Transverse colon (tissue), 4 donors: ENCODE measurements at regions of chr9 and their contacts with region 1.

Region 1: DNA sequence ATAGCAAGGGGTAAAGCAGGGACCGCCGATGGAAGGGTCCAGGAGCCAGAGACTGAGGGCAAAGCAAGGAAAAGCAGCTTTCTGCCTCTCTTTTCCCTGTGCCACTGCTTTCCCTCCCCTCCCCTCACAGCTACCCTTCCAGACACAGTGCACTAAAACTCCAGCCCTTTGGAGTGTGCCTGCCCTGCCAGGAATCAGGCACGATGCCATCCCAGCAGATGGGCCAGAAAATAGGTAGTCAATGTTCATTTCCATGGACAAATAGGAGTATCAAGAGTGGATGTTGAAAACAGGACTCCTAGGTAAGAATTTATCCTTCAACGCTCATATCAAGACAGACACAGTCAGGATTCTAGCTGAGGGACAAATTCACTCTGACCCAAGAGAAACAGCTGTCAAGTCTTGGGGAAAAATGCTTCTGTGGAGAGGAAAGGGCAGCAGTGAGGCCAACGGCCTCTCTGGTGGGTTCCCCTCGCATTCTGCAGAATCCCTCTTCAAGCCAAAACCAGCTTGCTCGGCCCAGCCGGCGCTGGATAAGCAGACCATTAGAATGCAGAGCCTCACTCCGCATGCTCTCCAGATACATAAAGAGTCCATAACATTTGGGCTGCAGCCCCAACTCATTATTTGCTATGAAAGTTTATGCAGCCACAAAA is 138.0 kb downstream of the CAAP1 start:
- DNase-seq: no peak
- H3K4me3 ChIP-seq: no peak overlapping the region
- H3K27ac ChIP-seq: no peak overlapping the region
- H3K4me1 ChIP-seq: no peaks in the 10 kb centered on the region
- H3K27me3 ChIP-seq: no peaks in the 10 kb centered on the region
- CTCF ChIP-seq: no peak
- EP300 ChIP-seq: no peak
- POLR2A ChIP-seq: no peak

Region 2: DNA sequence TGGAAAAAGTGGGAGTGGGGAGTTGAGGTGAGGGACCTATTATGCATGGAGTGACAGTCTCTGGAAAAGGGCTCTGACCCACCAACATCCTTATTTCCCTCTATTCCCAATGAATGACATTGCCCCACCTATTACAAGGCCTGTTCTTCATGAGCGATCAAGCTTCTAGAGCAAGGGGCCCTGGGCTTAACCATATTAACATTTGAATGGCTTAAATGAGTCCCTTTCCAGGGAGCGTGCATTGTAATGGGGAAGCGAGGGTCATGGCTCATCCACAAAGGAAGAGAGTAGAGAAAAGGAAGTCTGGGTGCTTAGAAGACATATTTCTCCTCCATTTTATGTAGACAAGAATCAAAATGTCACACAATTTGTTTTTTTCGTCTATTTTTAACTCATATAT is 117.5 kb before region 1 on chr9:
- in situ Hi-C with region 1: no loop called
- intact Hi-C with region 1: no loop called
- DNase-seq: no peak
- H3K4me3 ChIP-seq: no peak overlapping the region
- H3K27ac ChIP-seq: no peak overlapping the region
- H3K4me1 ChIP-seq: no peaks in the 10 kb centered on the region
- H3K27me3 ChIP-seq: no peaks in the 10 kb centered on the region
- CTCF ChIP-seq: no peak
- EP300 ChIP-seq: no peak
- POLR2A ChIP-seq: no peak

Region 3: GRCh38 chr9:26723486-26723885 is 31.2 kb before region 1 on chr9:
- in situ Hi-C with region 1: no loop called
- intact Hi-C with region 1: no loop called
- DNase-seq: peak; percentile 52
- H3K4me3 ChIP-seq: no peak overlapping the region
- H3K27ac ChIP-seq: no peak overlapping the region
- H3K4me1 ChIP-seq: no peaks in the 10 kb centered on the region
- H3K27me3 ChIP-seq: no peaks in the 10 kb centered on the region
- CTCF ChIP-seq: peak in 3 of 5 experiments; percentile 27 to 41 (median 35)
- EP300 ChIP-seq: no peak
- POLR2A ChIP-seq: no peak

Region 4: GRCh38 chr9:26856413-26857032 is 101.9 kb after region 1 on chr9:
- in situ Hi-C with region 1: loop called in 1 of 4 experiments (anchors 25 kb)
- intact Hi-C with region 1: no loop called
- DNase-seq: peak; percentile 21
- H3K4me3 ChIP-seq: no peak overlapping the region
- H3K27ac ChIP-seq: no peak overlapping the region
- H3K4me1 ChIP-seq: no peaks in the 10 kb centered on the region
- H3K27me3 ChIP-seq: no peaks in the 10 kb centered on the region
- CTCF ChIP-seq: peak; percentile 39 to 55 (median 47)
- EP300 ChIP-seq: no peak
- POLR2A ChIP-seq: no peak